ENCODE measurements at regions of chr5 and their contacts with region 1.

Region 1: DNA sequence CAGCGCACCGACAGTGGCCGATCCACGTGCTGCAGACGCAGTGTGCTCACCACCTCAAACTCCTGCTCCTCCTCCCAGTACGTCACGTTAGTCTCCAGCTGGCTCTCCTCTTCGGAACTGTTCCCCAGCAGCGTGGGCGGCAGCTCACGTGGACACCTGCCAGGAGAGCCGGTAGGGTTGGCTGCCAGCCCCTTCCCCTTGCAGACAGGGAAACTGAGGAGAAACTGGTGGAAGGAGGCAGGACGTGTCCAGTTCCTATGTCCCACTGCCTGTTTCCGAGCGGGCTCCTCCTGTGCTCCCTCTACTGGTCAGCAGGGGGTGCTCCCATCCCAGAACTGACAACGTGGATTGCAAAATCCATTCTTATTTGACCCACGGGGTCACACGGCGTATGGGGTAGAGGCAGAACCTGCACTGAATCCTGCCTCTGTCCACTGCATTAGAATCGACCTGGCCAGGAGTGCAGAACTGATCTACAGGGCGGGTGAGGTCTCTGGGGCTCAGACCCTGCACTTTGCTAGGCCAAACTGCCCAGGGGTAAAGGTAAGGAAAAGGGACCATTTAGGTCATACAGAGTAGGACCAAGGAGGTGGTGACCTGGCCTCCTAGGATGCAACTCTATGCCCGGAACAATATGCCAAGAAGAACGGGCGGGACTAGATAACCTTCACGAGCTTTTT is 25.7 kb downstream of the PDGFRB start:
- DNase-seq: no peak
- H3K4me3 ChIP-seq: no peak overlapping the region
- H3K27ac ChIP-seq: peak overlapping the region; percentile 83
- H3K4me1 ChIP-seq: peaks cover 47% of the 10 kb centered on the region
- H3K27me3 ChIP-seq: no peaks in the 10 kb centered on the region
- CTCF ChIP-seq: peak; percentile 76 to 93 (median 82)
- POLR2A ChIP-seq: no peak

Region 2: DNA sequence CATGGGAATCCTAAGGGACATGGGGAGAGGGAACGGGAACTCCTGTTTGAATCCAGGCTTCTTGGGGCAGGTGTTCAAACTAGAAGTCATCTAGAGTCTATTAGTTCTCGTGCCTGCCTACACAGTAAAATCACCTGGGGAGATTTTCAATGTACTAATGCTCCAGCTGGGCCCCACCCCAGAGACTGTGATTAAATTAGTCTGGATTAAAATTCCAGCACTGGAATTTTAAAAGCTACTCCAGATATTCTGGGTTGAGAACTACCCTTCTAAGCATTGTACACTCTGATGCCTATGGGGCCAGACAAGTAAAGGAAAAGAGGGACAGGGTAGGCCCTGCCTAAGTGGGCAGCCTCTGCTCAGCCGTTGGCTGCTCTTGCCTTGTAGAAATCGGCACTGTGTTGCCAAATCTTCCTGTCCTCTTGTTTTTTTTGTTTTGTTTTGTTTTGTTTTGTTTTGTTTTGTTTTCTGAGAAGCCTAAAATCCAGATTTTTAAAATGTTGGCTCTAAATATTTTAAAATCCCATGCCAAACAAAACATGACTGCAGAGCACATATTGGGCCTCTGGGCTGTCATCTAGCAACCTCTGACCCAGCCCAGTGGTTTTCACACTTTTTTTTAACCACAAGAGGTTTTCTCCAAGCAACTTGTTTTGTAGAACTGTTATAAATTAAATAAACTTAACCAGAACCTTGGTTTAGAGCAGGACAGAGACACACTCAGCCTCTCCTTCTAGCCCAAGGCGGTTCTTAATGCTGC is 1274.5 kb before region 1 on chr5:
- intact Hi-C with region 1: loop called (anchors 5 kb)
- DNase-seq: no peak
- H3K4me3 ChIP-seq: no peak overlapping the region
- H3K27ac ChIP-seq: no peak overlapping the region
- H3K4me1 ChIP-seq: peaks cover 6% of the 10 kb centered on the region
- H3K27me3 ChIP-seq: no peaks in the 10 kb centered on the region
- CTCF ChIP-seq: no peak
- POLR2A ChIP-seq: no peak

Region 3: GRCh38 chr5:150058480-150059126 is 71.3 kb before region 1 on chr5:
- intact Hi-C with region 1: no loop called
- DNase-seq: no peak
- H3K4me3 ChIP-seq: no peak overlapping the region
- H3K27ac ChIP-seq: no peak overlapping the region
- H3K4me1 ChIP-seq: no peaks in the 10 kb centered on the region
- H3K27me3 ChIP-seq: no peaks in the 10 kb centered on the region
- CTCF ChIP-seq: no peak
- POLR2A ChIP-seq: no peak

Region 4: DNA sequence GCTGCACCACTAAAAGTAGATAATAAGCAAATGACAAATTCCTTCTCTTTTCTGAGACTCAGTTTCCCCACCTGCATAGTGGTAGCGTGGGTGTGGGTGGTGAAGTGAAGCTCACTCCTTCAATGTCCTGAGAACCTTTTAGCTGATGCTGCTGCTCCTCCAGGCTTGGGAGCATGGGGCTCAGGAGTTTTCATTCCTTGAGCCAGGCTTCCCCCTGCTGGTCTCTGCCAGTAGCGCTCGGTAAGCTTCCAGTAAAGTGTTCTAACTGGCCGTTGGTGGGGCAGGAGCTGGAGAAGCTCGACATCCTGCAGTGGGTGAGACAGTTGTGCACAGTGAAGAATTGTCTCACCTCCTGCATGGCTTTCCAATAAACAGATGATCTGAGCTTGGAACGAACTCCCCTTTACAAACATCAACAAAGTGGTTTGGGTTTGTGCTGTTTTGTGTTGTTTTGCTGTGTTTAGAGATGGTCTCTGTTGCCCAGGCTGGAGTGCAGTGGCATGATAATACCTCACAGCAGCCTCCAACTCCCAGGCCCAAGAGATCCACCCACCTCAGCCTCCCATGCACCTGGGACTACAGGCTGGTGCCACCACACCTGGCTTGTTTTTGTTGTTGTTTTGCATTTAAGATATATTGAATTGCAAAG is 1522.2 kb after region 1 on chr5:
- intact Hi-C with region 1: no loop called
- DNase-seq: no peak
- H3K4me3 ChIP-seq: no peak overlapping the region
- H3K27ac ChIP-seq: no peak overlapping the region
- H3K4me1 ChIP-seq: no peaks in the 10 kb centered on the region
- H3K27me3 ChIP-seq: no peaks in the 10 kb centered on the region
- CTCF ChIP-seq: peak; percentile 43 to 84 (median 83)
- POLR2A ChIP-seq: no peak

Measured in vagina (tissue), 2 donors.